ENCODE measurements at regions of chr1 and their contacts with region 1.

Region 1: GRCh38 chr1:171252482-171252881 is 4.2 kb downstream of the FMO1 start:
- DNase-seq: peak; percentile 17
- ATAC-seq: peak; percentile 68
- H3K4me3 Mint-ChIP-seq: peak overlapping the region; percentile 65
- H3K27ac Mint-ChIP-seq: peak overlapping the region; percentile 36
- H3K4me1 Mint-ChIP-seq: peaks cover 17% of the 10 kb centered on the region
- H3K27me3 Mint-ChIP-seq: peaks cover 4% of the 10 kb centered on the region
- CTCF ChIP-seq: no peak

Region 2: GRCh38 chr1:171032822-171033702 is 219.4 kb before region 1 on chr1:
- CTCF ChIA-PET with region 1: no interaction called
- POLR2A ChIA-PET with region 1: no interaction called
- intact Hi-C with region 1: no loop called
- DNase-seq: no peak
- ATAC-seq: no peak
- H3K4me3 Mint-ChIP-seq: no peak overlapping the region
- H3K27ac Mint-ChIP-seq: no peak overlapping the region
- H3K4me1 Mint-ChIP-seq: no peaks in the 10 kb centered on the region
- H3K27me3 Mint-ChIP-seq: peaks cover 3% of the 10 kb centered on the region
- CTCF ChIP-seq: no peak

Region 3: DNA sequence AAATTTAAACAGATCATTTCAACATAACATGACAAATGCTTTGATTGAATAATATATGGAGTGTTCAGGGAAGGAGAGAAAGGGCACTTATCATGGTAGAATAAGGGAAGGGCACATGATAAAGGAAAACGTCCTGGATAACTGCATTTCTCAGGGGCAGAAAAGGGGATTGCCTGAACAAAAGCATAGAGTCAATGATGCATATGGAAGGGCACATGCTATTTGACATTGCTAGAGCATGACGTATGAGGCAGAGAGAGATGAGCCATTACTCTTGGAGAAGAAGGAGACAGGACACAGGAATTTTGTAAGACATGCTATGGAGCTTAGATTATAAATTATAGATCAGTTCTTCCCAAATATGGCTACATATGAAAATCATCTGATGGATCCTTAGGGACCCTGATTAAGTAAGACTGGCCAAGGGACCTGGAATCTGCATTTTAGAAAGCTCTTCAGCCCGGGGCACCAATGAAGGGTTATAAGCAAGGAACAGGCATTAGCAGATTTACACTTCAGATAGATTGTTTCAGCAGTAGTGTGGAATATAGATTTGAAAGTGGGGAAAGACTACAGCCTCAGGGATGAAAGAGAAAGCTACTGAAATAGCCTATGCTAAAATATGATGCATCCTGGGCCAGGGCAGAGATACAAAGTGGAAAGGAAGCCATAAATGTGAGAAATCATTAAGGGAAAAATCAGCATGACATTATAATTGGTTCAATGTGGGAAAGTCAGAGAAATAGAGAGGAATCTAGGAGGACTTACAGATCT is 46.1 kb before region 1 on chr1:
- CTCF ChIA-PET with region 1: no interaction called
- POLR2A ChIA-PET with region 1: no interaction called
- intact Hi-C with region 1: no loop called
- DNase-seq: no peak
- ATAC-seq: no peak
- H3K4me3 Mint-ChIP-seq: no peak overlapping the region
- H3K27ac Mint-ChIP-seq: no peak overlapping the region
- H3K4me1 Mint-ChIP-seq: no peaks in the 10 kb centered on the region
- H3K27me3 Mint-ChIP-seq: peaks cover 11% of the 10 kb centered on the region
- CTCF ChIP-seq: no peak

Region 4: GRCh38 chr1:171263901-171264300 is 11.4 kb after region 1 on chr1:
- CTCF ChIA-PET with region 1: interaction called, 3 read pairs
- POLR2A ChIA-PET with region 1: no interaction called
- intact Hi-C with region 1: loop called (anchors 1 kb)
- DNase-seq: no peak
- ATAC-seq: no peak
- H3K4me3 Mint-ChIP-seq: no peak overlapping the region
- H3K27ac Mint-ChIP-seq: no peak overlapping the region
- H3K4me1 Mint-ChIP-seq: no peaks in the 10 kb centered on the region
- H3K27me3 Mint-ChIP-seq: peaks cover 3% of the 10 kb centered on the region
- CTCF ChIP-seq: no peak

Measured in activated B cell treated with CpG ODN at 0.5 μM for 24 hours (primary cell).